ENCODE measurements at regions of chr7 and their contacts with region 1.

Region 1: DNA sequence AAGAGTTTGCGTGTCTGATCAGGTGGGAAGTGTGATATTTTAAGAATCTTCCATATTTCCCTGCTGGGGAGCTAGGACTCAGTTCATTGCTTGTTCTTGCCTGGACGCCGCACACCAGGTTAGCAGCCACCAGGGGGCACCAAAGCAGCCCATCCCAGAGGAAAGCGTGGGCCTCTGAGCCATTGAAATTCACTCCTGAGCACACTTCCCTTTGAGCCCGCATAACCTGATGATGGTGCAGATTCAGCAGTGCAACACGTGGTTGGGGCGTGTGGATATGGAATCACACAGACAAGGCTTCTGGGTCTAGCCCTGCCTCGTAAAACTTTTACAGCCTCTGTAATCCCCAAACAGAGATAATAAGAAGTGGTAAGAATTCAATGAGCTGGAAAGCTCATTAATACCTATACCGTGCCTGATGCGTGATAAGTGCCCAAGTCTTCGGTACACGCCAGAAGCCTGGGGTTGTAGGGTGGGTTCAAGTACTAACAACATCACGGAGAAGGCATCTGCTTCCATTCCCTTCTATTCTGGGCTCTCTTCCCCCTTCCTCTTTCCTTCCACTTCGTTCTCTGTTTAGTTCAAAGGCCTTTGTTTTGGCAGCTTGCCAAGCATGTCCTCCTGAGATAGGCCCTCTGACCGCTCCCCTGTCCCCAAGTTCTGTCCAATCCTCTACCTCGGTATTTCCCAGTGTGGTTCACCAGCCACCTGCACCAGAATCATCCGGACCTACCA is 130.1 kb upstream of the KMT2E start:
- DNase-seq: peak; percentile 74
- ATAC-seq: peak; percentile 86
- H3K4me3 Mint-ChIP-seq: no peak overlapping the region
- H3K27ac Mint-ChIP-seq: no peak overlapping the region
- H3K4me1 Mint-ChIP-seq: peaks cover 12% of the 10 kb centered on the region
- H3K27me3 Mint-ChIP-seq: peaks cover 3% of the 10 kb centered on the region

Region 2: GRCh38 chr7:104862719-104863118 is 21.2 kb before region 1 on chr7:
- CTCF ChIA-PET with region 1: interaction called, 11 read pairs
- DNase-seq: no peak
- ATAC-seq: no peak
- H3K4me3 Mint-ChIP-seq: no peak overlapping the region
- H3K27ac Mint-ChIP-seq: no peak overlapping the region
- H3K4me1 Mint-ChIP-seq: peaks cover 10% of the 10 kb centered on the region
- H3K27me3 Mint-ChIP-seq: peaks cover 34% of the 10 kb centered on the region

Region 3: DNA sequence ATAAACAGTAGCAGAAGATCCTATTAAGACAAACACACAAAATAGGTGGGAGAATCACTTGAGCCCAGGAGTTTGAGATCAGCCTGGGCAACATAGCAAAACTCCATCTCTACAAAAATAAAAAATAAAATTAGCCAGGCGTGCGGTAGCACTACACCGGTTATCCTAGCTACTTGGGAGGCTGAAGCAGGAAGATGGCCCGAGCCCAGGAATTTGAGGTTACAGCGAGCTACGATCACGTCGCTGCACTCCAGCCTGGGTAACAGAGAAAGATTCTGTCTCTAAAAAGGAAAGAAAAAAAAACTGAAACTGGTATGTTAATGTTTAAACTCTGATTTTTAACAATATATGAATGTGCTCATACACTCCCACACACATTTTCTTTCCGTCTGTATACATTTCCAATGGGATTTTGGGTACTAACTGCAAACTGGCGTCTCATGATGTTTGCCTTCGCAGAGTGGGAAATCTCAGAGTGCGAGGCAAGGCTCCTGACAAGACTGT is 10.5 kb before region 1 on chr7:
- CTCF ChIA-PET with region 1: interaction called, 10 read pairs
- DNase-seq: no peak
- ATAC-seq: no peak
- H3K4me3 Mint-ChIP-seq: no peak overlapping the region
- H3K27ac Mint-ChIP-seq: no peak overlapping the region
- H3K4me1 Mint-ChIP-seq: peaks cover 6% of the 10 kb centered on the region
- H3K27me3 Mint-ChIP-seq: peaks cover 3% of the 10 kb centered on the region

Region 4: GRCh38 chr7:104895522-104896236 is 11.8 kb after region 1 on chr7:
- CTCF ChIA-PET with region 1: interaction called, 50 read pairs
- DNase-seq: no peak
- ATAC-seq: no peak
- H3K4me3 Mint-ChIP-seq: no peak overlapping the region
- H3K27ac Mint-ChIP-seq: no peak overlapping the region
- H3K4me1 Mint-ChIP-seq: peaks cover 12% of the 10 kb centered on the region
- H3K27me3 Mint-ChIP-seq: peaks cover 2% of the 10 kb centered on the region

Region 5: DNA sequence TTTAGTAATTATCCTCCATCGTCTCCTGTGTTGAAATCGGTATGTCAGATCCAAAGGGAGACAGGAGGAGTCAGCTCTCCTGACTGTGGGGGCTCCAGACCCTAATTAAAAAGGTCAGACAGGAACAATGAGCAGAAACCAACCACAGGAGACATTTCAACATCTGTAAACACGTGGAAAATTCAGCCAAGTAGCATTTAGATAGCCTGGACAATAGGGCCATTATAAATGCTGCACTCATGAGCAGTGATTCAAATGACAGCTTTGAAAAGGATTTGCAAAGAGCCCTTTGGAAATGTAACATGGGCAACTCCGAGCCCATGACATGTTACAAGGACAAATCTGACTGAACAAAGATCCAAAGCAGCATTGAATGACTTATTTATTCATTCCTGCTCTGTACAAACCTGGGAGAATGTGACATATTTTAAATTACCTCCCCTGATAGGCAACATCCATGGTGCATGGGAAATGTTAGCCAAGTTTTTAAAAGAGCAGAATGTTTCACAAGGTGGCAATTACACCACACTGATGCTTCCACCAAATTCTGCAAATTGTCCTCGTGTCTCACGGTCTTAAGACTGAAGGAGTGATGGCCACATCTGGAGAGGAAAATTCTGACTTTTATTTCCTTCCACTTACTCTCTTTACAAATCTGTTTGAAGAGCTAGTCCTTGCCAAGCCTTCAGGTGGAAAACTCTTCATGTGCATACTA is 16.8 kb after region 1 on chr7:
- CTCF ChIA-PET with region 1: interaction called, 50 read pairs
- DNase-seq: no peak
- ATAC-seq: no peak
- H3K4me3 Mint-ChIP-seq: no peak overlapping the region
- H3K27ac Mint-ChIP-seq: no peak overlapping the region
- H3K4me1 Mint-ChIP-seq: peaks cover 9% of the 10 kb centered on the region
- H3K27me3 Mint-ChIP-seq: peaks cover 7% of the 10 kb centered on the region

Region 6: DNA sequence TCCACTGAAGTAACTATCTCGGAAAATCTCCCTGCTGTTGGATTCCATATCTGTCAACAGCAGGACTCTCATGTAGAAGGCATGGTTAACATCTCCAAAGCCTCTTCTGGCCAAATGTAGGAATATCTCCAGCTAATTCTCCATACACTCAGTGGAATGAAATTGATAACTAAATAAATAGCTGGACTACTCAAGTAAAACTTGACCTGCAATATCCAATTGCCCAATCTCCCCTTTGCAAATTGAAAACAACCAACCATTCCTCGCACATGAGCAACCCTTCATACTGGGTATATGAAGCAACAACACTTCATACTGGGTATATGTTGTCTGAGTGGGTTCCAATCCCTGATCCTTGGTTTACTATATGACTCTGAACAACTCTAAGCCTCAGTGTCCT is 24.8 kb after region 1 on chr7:
- CTCF ChIA-PET with region 1: interaction called, 103 read pairs
- DNase-seq: no peak
- ATAC-seq: no peak
- H3K4me3 Mint-ChIP-seq: no peak overlapping the region
- H3K27ac Mint-ChIP-seq: no peak overlapping the region
- H3K4me1 Mint-ChIP-seq: peaks cover 2% of the 10 kb centered on the region
- H3K27me3 Mint-ChIP-seq: peaks cover 23% of the 10 kb centered on the region

Region 7: GRCh38 chr7:104914421-104914820 is 30.5 kb after region 1 on chr7:
- CTCF ChIA-PET with region 1: interaction called, 103 read pairs
- DNase-seq: no peak
- ATAC-seq: no peak
- H3K4me3 Mint-ChIP-seq: no peak overlapping the region
- H3K27ac Mint-ChIP-seq: no peak overlapping the region
- H3K4me1 Mint-ChIP-seq: peaks cover 4% of the 10 kb centered on the region
- H3K27me3 Mint-ChIP-seq: peaks cover 20% of the 10 kb centered on the region

Region 8: DNA sequence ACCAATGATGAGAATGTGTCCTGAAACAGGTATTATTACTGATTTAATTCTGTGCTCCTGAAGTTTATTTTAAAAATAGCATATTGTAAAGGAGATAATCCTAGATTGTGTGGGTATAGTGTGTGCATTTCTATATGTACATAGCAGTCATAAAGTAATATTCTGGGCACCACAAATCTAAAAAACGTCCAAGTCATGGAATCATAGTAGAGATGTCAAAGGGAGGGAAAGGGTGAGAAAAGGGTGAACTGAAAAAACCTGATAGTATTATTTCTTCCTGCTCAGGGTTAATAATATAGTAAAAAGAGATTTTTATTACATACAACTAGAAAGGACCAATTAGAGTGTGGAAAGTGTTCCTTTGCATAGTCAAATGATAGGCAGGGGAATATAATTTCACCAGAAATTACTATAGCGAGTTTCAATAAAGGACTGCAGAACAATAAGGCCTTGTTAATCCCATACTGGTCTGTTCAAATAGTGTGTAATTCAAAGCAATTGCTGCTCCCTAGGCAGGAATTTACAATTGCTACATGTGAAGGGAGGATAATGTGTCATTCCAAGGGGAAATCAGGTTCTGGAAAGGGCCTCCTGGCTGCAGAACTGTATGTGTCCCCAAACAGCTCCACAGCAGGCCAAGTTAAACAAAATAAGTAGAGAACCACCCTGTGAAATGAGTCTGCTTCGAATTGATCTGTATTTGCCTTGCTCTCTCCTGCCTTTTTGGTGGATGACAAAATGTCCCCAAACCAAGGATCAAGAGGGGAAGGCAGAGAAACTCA is 87.6 kb after region 1 on chr7:
- CTCF ChIA-PET with region 1: no interaction called
- DNase-seq: no peak
- ATAC-seq: no peak
- H3K4me3 Mint-ChIP-seq: no peak overlapping the region
- H3K27ac Mint-ChIP-seq: no peak overlapping the region
- H3K4me1 Mint-ChIP-seq: peaks cover 6% of the 10 kb centered on the region
- H3K27me3 Mint-ChIP-seq: no peaks in the 10 kb centered on the region